ENCODE measurements at regions of chr4 and their contacts with region 1.

Region 1: GRCh38 chr4:173478201-173478912 is 51.7 kb downstream of the HAND2 start:
- DNase-seq: no peak
- H3K4me3 ChIP-seq: no peak overlapping the region
- H3K27ac ChIP-seq: no peak overlapping the region
- H3K4me1 ChIP-seq: no peaks in the 10 kb centered on the region
- H3K27me3 ChIP-seq: no peaks in the 10 kb centered on the region
- CTCF ChIP-seq: no peak
- EP300 ChIP-seq: no peak
- POLR2A ChIP-seq: no peak

Region 2: GRCh38 chr4:173211838-173212237 is 266.5 kb before region 1 on chr4:
- intact Hi-C with region 1: loop called in 1 of 4 experiments (anchors 10 kb)
- DNase-seq: no peak
- H3K4me3 ChIP-seq: no peak overlapping the region
- H3K27ac ChIP-seq: no peak overlapping the region
- H3K4me1 ChIP-seq: no peaks in the 10 kb centered on the region
- H3K27me3 ChIP-seq: no peaks in the 10 kb centered on the region
- CTCF ChIP-seq: no peak
- EP300 ChIP-seq: no peak
- POLR2A ChIP-seq: no peak